MCF 10A (cell line): ENCODE measurements at regions of chr5 and their contacts with region 1.

Region 1: GRCh38 chr5:126808521-126808988 is 31.6 kb downstream of the LMNB1 start:
- DNase-seq: peak; percentile 61
- H3K4me3 Mint-ChIP-seq: no peak overlapping the region
- H3K27ac Mint-ChIP-seq: peak overlapping the region; percentile 61
- H3K4me1 Mint-ChIP-seq: peaks cover 17% of the 10 kb centered on the region
- H3K27me3 Mint-ChIP-seq: no peaks in the 10 kb centered on the region
- CTCF ChIP-seq: peak; percentile 47

Region 2: GRCh38 chr5:126656396-126657007 is 152.1 kb before region 1 on chr5:
- CTCF ChIA-PET with region 1: interaction called, 54 read pairs
- POLR2A ChIA-PET with region 1: no interaction called
- intact Hi-C with region 1: no loop called
- DNase-seq: peak; percentile 67
- H3K4me3 Mint-ChIP-seq: no peak overlapping the region
- H3K27ac Mint-ChIP-seq: no peak overlapping the region
- H3K4me1 Mint-ChIP-seq: no peaks in the 10 kb centered on the region
- H3K27me3 Mint-ChIP-seq: no peaks in the 10 kb centered on the region
- CTCF ChIP-seq: peak; percentile 98

Region 3: DNA sequence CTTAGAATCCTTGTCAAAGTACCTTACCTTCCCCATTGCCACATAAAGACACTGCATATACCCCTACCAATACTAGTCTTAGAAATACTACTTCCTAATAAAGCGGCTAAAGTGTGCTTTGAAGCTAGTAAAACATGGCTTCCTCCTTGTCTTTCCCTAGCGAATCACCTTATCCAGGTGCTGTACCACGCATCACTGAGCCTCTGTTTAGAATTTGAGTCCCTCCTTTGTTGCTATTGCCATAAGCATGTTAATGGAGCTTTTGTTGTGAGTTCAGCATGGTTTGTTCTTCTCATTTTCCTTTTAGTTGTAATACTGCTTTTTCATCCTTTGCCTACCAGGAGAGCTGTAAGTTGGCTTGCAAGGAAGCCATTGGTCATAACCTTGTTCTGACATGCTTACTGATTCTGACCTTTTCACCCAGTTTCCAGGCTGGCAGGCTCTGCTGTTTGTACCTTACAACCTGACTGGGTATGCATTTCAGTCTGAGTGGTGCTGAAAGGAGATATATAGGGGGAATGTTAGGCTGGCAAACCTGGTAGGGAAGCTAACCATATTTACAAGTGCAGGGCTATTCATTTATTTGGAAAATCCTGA is 18.2 kb after region 1 on chr5:
- CTCF ChIA-PET with region 1: interaction called, 10 read pairs
- POLR2A ChIA-PET with region 1: interaction called, 3 read pairs
- intact Hi-C with region 1: no loop called
- DNase-seq: no peak
- H3K4me3 Mint-ChIP-seq: no peak overlapping the region
- H3K27ac Mint-ChIP-seq: no peak overlapping the region
- H3K4me1 Mint-ChIP-seq: no peaks in the 10 kb centered on the region
- H3K27me3 Mint-ChIP-seq: no peaks in the 10 kb centered on the region
- CTCF ChIP-seq: no peak

Region 4: DNA sequence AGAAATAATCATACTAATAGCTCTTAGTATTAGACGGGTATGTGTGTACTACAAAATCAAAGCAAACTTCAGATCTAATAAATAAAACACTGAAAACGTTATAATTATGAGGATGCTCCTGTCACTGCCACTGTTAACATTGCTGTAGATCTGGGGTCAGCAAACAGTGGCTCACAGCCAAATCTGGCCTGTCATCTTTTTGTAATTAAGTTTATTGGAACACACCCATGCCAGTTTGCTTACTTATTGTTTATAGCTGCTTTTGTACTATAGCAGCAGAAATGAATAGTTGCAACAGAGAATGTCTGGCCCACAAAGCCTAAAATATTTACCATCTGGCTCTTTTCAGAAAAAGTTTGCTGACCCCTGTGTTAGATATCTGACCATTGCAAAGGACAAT is 741.0 kb after region 1 on chr5:
- CTCF ChIA-PET with region 1: no interaction called
- POLR2A ChIA-PET with region 1: no interaction called
- intact Hi-C with region 1: no loop called
- DNase-seq: no peak
- H3K4me3 Mint-ChIP-seq: no peak overlapping the region
- H3K27ac Mint-ChIP-seq: no peak overlapping the region
- H3K4me1 Mint-ChIP-seq: peaks cover 9% of the 10 kb centered on the region
- H3K27me3 Mint-ChIP-seq: no peaks in the 10 kb centered on the region
- CTCF ChIP-seq: no peak